ENCODE measurements at regions of chr1 and their contacts with region 1.

Region 1: DNA sequence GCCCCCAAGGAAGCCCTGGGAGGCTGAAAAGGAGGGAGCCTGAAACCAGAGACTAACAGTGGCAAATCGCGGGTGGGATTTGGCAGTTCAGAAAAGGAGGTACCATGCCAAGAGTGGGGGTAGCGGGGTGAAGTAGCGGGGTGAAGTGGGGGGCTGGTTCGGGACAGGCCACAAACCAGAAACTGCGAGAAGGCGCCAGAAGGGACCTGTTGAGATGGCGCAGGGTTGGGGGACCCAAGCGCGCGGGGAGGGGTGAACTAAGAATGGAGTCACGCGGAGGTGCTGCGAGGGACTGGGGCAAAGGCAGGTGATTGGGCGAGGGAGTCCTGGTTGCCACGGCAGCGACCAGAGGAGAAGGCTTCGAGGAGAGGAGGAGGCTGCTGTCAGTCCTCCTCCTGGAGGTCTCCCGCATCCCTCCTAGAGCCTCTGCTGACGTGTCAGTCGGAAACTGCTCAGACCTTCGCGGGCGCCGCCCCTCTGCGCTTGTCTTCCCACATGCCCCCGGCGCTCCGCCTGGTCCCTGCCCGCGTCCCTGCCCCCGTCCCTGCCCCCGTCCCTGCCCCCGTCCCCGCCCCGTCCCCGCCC is 438 bp upstream of the MIA3 start:
- DNase-seq: peak; percentile 89
- H3K4me3 Mint-ChIP-seq: peak overlapping the region; percentile 80
- H3K27ac Mint-ChIP-seq: peak overlapping the region; percentile 75
- H3K4me1 Mint-ChIP-seq: peaks cover 25% of the 10 kb centered on the region
- H3K27me3 Mint-ChIP-seq: peaks cover 36% of the 10 kb centered on the region

Region 2: GRCh38 chr1:220879076-220879508 is 1738.4 kb before region 1 on chr1 and contains the start of gene HLX:
- intact Hi-C with region 1: loop called (anchors 10 kb)
- DNase-seq: peak; percentile 15
- H3K4me3 Mint-ChIP-seq: peak within 1 kb of the TSS; percentile 85
- H3K27ac Mint-ChIP-seq: peak within 1 kb of the TSS; percentile 78
- H3K4me1 Mint-ChIP-seq: peaks cover 31% of the 10 kb centered on the region
- H3K27me3 Mint-ChIP-seq: peaks cover 70% of the 10 kb centered on the region
- total RNA-seq, gene HLX: 8.2 and 10.4 TPM in 2 replicates

Region 3: GRCh38 chr1:222357252-222357651 is 260.2 kb before region 1 on chr1:
- intact Hi-C with region 1: no loop called
- DNase-seq: no peak
- H3K4me3 Mint-ChIP-seq: no peak overlapping the region
- H3K27ac Mint-ChIP-seq: no peak overlapping the region
- H3K4me1 Mint-ChIP-seq: no peaks in the 10 kb centered on the region
- H3K27me3 Mint-ChIP-seq: no peaks in the 10 kb centered on the region

Region 4: GRCh38 chr1:222589462-222590302 is 27.8 kb before region 1 on chr1 and contains the start of gene TAF1A:
- intact Hi-C with region 1: loop called (anchors 1 kb)
- DNase-seq: peak; percentile 79
- H3K4me3 Mint-ChIP-seq: peak within 1 kb of the TSS; percentile 96
- H3K27ac Mint-ChIP-seq: peak within 1 kb of the TSS; percentile 93
- H3K4me1 Mint-ChIP-seq: peaks cover 27% of the 10 kb centered on the region
- H3K27me3 Mint-ChIP-seq: no peaks in the 10 kb centered on the region
- total RNA-seq, gene TAF1A: 17.6 and 17.9 TPM in 2 replicates

Region 5: DNA sequence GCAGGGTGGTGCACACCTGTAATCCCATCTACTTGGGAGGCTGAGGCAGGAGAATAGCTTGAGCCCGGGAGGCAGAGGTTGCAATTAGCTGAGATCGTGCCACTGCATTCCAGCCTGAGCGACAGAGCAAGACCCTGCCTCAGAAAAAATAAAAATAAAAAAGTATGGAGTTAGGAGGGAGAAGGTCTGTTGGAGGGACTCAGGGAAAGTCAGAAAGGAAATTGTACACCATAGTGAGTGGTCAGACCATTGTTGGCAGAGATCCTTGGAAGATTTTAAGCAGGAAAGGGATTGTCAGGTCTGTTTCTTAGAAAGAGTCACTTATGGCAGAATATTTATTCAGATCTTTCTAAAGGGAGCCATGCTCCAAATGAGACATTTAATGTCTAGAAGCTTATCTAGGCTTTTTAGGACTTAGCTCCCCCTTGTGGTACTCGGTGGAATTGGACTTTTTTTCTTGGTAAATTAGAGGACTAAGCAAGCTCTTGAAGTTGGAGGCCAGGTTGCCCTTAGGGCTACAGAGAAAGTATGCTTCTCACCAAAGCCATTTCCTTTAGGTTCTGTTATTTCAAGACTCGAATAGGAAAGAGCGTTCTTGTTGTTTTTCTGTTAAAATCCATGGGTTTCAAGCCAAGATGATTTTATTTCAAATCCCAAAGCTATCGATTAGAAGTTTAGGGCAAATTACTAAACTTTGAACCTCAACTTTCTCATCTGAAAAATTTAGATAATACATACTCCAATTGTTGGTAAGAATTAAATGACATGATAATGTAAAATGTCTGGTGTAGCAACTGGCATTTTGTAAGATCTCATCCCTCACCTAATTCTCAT is 16.9 kb after region 1 on chr1:
- intact Hi-C with region 1: loop called (anchors 2 kb)
- DNase-seq: peak; percentile 53
- H3K4me3 Mint-ChIP-seq: no peak overlapping the region
- H3K27ac Mint-ChIP-seq: no peak overlapping the region
- H3K4me1 Mint-ChIP-seq: peaks cover 10% of the 10 kb centered on the region
- H3K27me3 Mint-ChIP-seq: no peaks in the 10 kb centered on the region

Region 6: GRCh38 chr1:222643938-222644635 is 26.6 kb after region 1 on chr1:
- intact Hi-C with region 1: loop called (anchors 1 kb)
- DNase-seq: peak; percentile 97
- H3K4me3 Mint-ChIP-seq: peak overlapping the region; percentile 99
- H3K27ac Mint-ChIP-seq: peak overlapping the region; percentile 94
- H3K4me1 Mint-ChIP-seq: peaks cover 18% of the 10 kb centered on the region
- H3K27me3 Mint-ChIP-seq: no peaks in the 10 kb centered on the region

Region 7: GRCh38 chr1:222713091-222713961 is 95.9 kb after region 1 on chr1:
- intact Hi-C with region 1: loop called (anchors 1 kb)
- DNase-seq: peak; percentile 81
- H3K4me3 Mint-ChIP-seq: peak overlapping the region; percentile 99
- H3K27ac Mint-ChIP-seq: peak overlapping the region; percentile 97
- H3K4me1 Mint-ChIP-seq: peaks cover 30% of the 10 kb centered on the region
- H3K27me3 Mint-ChIP-seq: no peaks in the 10 kb centered on the region

Measured in activated T-helper 2 cell treated with anti-CD3 and anti-CD28 coated beads, Interferon-gamma antibody, Interleukin-2, Interleukin-4, amounts not matched to agents 10 μg/mL and 5 μg/mL and 100 μg/mL, durations not matched to agents 14 hours and 24 hours and 36 hours (primary cell).